Activated T-helper 2 cell treated with anti-CD3 and anti-CD28 coated beads, Interferon-gamma antibody, Interleukin-2, Interleukin-4, amounts not matched to agents 10 μg/mL and 5 μg/mL and 100 μg/mL, durations not matched to agents 14 hours and 24 hours and 36 hours (primary cell): ENCODE measurements at regions of chr9 and their contacts with region 1.

Region 1: GRCh38 chr9:125189361-125190289 is at the start of gene PPP6C:
- DNase-seq: peak; percentile 96
- H3K4me3 Mint-ChIP-seq: peak within 1 kb of the TSS; percentile 94
- H3K27ac Mint-ChIP-seq: peak within 1 kb of the TSS; percentile 91
- H3K4me1 Mint-ChIP-seq: peaks cover 20% of the 10 kb centered on the region
- H3K27me3 Mint-ChIP-seq: no peaks in the 10 kb centered on the region
- total RNA-seq, gene PPP6C: 44.3 and 44.9 TPM in 2 replicates

Region 2: GRCh38 chr9:124869986-124870560 is 319.6 kb before region 1 on chr9:
- intact Hi-C with region 1: loop called (anchors 5 kb)
- DNase-seq: peak; percentile 71
- H3K4me3 Mint-ChIP-seq: peak overlapping the region; percentile 99
- H3K27ac Mint-ChIP-seq: peak overlapping the region; percentile 98
- H3K4me1 Mint-ChIP-seq: peaks cover 39% of the 10 kb centered on the region
- H3K27me3 Mint-ChIP-seq: no peaks in the 10 kb centered on the region

Region 3: GRCh38 chr9:125200210-125201047 is 10.8 kb after region 1 on chr9 and contains the start of gene RABEPK:
- intact Hi-C with region 1: loop called (anchors 1 kb)
- DNase-seq: peak; percentile 88
- H3K4me3 Mint-ChIP-seq: peak within 1 kb of the TSS; percentile 91
- H3K27ac Mint-ChIP-seq: peak within 1 kb of the TSS; percentile 88
- H3K4me1 Mint-ChIP-seq: peaks cover 16% of the 10 kb centered on the region
- H3K27me3 Mint-ChIP-seq: peaks cover 5% of the 10 kb centered on the region
- total RNA-seq, gene RABEPK: 32.8 and 34.0 TPM in 2 replicates

Region 4: DNA sequence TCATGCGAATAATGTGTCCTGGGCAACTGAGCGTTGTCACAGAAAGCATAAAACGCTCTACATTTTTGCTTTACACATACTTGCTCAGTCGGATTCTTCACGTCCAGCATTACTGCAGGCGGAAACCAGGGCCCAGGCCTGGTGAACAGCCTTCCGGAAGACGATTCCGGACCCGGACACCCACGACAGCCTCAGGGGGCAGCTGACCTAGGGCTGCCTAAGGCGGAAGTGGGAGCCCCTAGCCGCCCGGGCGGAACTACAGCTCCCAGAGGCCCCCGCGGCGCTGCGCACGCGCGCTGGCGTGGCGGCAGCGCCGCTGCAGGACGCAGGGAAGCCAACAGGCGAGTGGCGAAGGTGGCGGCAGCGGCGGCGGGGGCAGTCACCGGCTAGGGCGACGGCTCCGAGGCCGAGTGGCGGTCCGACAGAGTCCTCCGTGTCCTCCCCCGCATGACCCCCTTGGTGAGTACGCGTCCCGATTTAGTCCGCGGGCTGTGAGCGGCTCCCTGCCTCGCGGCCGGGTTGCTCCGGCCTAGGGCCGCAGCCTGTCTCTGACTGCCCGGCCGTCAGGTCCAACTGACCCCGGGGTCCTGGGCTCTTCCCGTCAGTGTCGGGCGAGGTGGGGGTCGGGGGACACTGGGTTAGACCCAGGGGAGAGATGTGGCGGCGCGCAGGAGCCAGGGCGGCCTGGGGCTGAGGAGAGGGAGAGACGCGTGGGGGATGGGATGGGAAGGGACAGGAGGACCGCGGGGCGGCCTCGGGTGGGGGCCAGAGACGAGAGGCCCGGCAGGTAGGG is 72.1 kb after region 1 on chr9 and contains the start of gene GAPVD1:
- intact Hi-C with region 1: loop called (anchors 1 kb)
- DNase-seq: peak; percentile 86
- H3K4me3 Mint-ChIP-seq: peak within 1 kb of the TSS; percentile 98
- H3K27ac Mint-ChIP-seq: peak within 1 kb of the TSS; percentile 90
- H3K4me1 Mint-ChIP-seq: peaks cover 32% of the 10 kb centered on the region
- H3K27me3 Mint-ChIP-seq: peaks cover 2% of the 10 kb centered on the region
- total RNA-seq, gene GAPVD1: 50.8 and 51.0 TPM in 2 replicates